ENCODE measurements at regions of chr6 and their contacts with region 1.

Region 1: GRCh38 chr6:99119109-99120031 is 171.6 kb upstream of the FBXL4 start:
- DNase-seq: no peak
- ATAC-seq: peak; percentile 26 to 36
- H3K4me3 ChIP-seq: no peak overlapping the region
- H3K27ac ChIP-seq: no peak overlapping the region
- H3K4me1 ChIP-seq: no peaks in the 10 kb centered on the region
- H3K27me3 ChIP-seq: no peaks in the 10 kb centered on the region

Region 2: GRCh38 chr6:97497713-97498331 is 1621.5 kb before region 1 on chr6:
- intact Hi-C with region 1: loop called in 1 of 4 experiments (anchors 10 kb)
- DNase-seq: peak; percentile 54 to 78 (median 77)
- ATAC-seq: peak; percentile 87 to 89
- H3K4me3 ChIP-seq: no peak overlapping the region
- H3K27ac ChIP-seq: no peak overlapping the region
- H3K4me1 ChIP-seq: no peaks in the 10 kb centered on the region
- H3K27me3 ChIP-seq: no peaks in the 10 kb centered on the region

Region 3: GRCh38 chr6:97669191-97670031 is 1450.0 kb before region 1 on chr6:
- intact Hi-C with region 1: no loop called
- DNase-seq: peak; percentile 15 to 61 (median 50)
- ATAC-seq: peak; percentile 93 to 94
- H3K4me3 ChIP-seq: peak overlapping the region; percentile 40
- H3K27ac ChIP-seq: peak overlapping the region; percentile 1
- H3K4me1 ChIP-seq: no peaks in the 10 kb centered on the region
- H3K27me3 ChIP-seq: no peaks in the 10 kb centered on the region

Region 4: DNA sequence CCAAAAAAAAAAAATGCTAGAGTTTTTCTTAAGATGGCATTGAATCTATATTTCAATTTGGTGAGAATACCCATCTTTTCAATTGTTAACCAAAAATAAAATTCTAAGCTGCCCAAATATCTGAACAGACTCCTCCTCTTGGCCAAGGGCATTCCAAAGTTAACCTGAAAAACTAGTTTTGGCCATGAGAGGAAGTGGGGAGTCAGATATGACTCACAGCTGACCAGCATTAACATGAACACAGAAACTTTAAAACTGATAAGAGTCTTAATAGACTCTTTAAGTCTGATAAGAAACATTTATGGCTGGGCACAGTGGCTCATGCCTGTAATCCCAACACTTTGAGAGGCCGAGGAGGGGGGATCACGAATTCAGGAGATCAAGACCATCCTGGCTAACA is 58.8 kb after region 1 on chr6:
- intact Hi-C with region 1: no loop called
- DNase-seq: no peak
- ATAC-seq: no peak
- H3K4me3 ChIP-seq: no peak overlapping the region
- H3K27ac ChIP-seq: no peak overlapping the region
- H3K4me1 ChIP-seq: no peaks in the 10 kb centered on the region
- H3K27me3 ChIP-seq: no peaks in the 10 kb centered on the region

Measured in right cardiac atrium (tissue), 5 donors.